Naive thymus-derived CD4-positive, alpha-beta T cell (primary cell): ENCODE measurements at regions of chr14 and their contacts with region 1.

Region 1: DNA sequence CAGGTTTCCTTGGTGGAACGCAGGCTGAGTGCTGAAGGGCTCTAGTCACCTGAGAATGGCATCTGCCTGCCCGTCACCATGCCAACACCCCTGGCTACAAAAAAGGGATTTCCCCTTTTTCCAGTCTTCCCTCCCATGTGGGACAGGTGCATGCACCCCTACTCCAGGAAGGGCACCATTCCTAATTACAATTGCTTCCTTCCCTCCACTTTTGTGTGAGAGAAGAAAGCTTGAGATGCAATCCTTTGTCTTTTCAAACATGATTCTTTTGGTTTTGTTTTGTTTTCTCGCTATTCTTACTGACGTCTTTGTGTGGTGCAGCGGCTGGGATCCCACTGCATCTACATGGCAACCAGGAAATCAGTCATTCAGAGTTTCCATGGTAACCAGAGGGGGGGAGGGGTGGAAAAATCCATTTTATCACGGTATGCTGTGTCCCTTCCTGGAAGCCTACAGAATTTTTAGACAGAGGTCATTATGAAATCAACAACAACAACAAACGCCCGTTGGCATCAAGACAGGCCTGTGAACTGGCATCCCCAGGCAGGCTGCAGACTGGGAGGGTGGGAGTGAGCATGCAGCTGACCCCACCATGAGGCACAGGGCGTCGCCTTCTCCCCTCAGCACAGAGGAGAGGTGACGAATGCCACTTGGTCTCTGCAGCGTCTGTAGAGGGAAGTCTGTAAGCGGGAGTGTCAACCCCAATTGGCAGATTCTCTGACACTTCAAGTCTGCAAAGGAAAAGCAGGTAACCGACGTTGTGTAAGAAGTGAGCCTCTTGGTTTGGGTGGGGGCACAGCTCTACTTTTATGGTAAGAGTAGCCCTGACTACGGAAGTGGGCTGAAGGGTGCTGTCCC is 13.6 kb upstream of the GNG2 start:
- DNase-seq: peak; percentile 69 to 98 (median 94)
- ATAC-seq: peak; percentile 87
- H3K4me3 ChIP-seq: peak overlapping the region; percentile 63
- H3K4me3 Mint-ChIP-seq: peak overlapping the region; percentile 55 to 96 (median 88)
- H3K27ac ChIP-seq: peak overlapping the region; percentile 96
- H3K27ac Mint-ChIP-seq: peak overlapping the region; percentile 97 to 100 (median 99)
- H3K4me1 ChIP-seq: peaks cover 23 to 43% of the 10 kb centered on the region in 2 donors
- H3K4me1 Mint-ChIP-seq: peaks cover 29 to 83% (median 74%) of the 10 kb centered on the region in 7 donors
- H3K27me3 ChIP-seq: no peaks in the 10 kb centered on the region
- H3K27me3 Mint-ChIP-seq: peaks cover 0 to 2% (median 0%) of the 10 kb centered on the region in 5 donors

Region 2: DNA sequence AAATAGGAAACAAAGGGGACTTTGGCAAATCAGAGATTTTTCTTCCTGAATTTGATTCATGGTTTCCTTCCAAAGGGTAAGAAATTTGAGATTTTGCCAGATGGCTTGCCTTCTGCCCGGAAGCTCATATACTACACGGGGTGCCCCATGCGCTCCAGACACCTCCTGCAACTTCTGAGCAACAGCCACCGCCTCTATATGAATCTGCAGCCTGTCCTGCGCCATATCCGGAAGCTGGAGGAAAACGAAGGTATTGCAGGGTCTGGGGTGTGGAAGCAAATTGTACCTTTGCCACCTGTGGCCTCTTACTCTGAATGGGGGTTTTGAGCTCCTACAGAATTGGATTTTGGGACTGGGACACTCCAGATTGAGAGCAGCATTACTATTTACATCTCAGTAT is 131.6 kb before region 1 on chr14:
- CTCF ChIA-PET with region 1: no interaction called
- POLR2A ChIA-PET with region 1: no interaction called
- intact Hi-C with region 1: no loop called
- DNase-seq: no peak
- ATAC-seq: no peak
- H3K4me3 ChIP-seq: no peak overlapping the region
- H3K4me3 Mint-ChIP-seq: no peak overlapping the region
- H3K27ac ChIP-seq: no peak overlapping the region
- H3K27ac Mint-ChIP-seq: no peak overlapping the region
- H3K4me1 ChIP-seq: no peaks in the 10 kb centered on the region
- H3K4me1 Mint-ChIP-seq: peaks cover 0 to 2% (median 0%) of the 10 kb centered on the region in 7 donors
- H3K27me3 ChIP-seq: no peaks in the 10 kb centered on the region
- H3K27me3 Mint-ChIP-seq: peaks cover 0 to 2% (median 0%) of the 10 kb centered on the region in 5 donors

Region 3: DNA sequence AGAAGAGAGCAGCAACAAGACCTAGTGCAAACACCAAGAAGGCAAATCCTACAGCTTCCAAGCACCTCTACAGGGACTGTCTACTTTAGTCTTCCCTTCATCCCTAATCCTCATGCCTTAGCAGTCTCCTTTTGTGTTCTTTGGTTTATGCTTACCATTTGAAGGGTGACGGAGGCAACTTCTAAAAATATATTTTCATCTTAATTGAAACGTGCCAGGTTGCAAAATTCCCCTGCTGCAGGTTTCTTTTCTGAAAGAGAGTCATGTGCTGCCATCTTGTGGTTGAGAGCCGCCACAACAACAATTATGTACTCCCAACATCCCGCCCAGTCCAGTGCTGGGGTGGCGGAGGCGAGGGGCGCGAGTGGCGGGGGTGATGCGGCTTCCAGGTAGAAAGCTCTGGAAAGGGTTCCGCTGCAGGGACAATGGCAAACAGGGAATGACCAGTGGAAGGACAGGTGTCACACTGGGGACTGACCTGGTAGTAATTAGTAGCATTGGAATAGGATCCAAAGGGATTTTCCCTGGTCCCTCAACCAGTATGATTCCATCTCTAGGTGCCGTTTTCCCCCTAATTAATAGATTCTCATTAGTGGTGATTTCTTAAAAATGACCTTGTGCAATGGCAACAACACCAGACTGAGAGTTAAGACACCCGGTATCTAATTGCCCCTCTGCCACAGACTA is 66.7 kb before region 1 on chr14:
- CTCF ChIA-PET with region 1: interaction called, 3 read pairs
- POLR2A ChIA-PET with region 1: no interaction called
- intact Hi-C with region 1: loop called (anchors 1 to 2 kb)
- DNase-seq: peak; percentile 34 to 74 (median 64)
- ATAC-seq: peak; percentile 84
- H3K4me3 ChIP-seq: no peak overlapping the region
- H3K4me3 Mint-ChIP-seq: peak overlapping the region; percentile 5 to 76 (median 53)
- H3K27ac ChIP-seq: no peak overlapping the region
- H3K27ac Mint-ChIP-seq: peak overlapping the region in 6 of 9 donors; percentile 35 to 89 (median 46)
- H3K4me1 ChIP-seq: peaks cover 5 to 15% of the 10 kb centered on the region in 2 donors
- H3K4me1 Mint-ChIP-seq: peaks cover 18 to 34% (median 26%) of the 10 kb centered on the region in 7 donors
- H3K27me3 ChIP-seq: no peaks in the 10 kb centered on the region
- H3K27me3 Mint-ChIP-seq: peaks cover 0 to 48% (median 5%) of the 10 kb centered on the region in 5 donors

Region 4: GRCh38 chr14:51873221-51873893 is 26.5 kb after region 1 on chr14:
- CTCF ChIA-PET with region 1: no interaction called
- POLR2A ChIA-PET with region 1: interaction called, 3 read pairs
- intact Hi-C with region 1: loop called in 1 of 2 experiments (anchors 1 kb)
- DNase-seq: peak in 2 of 9 donors; percentile 38 to 50
- ATAC-seq: peak; percentile 76
- H3K4me3 ChIP-seq: no peak overlapping the region
- H3K4me3 Mint-ChIP-seq: peak overlapping the region in 6 of 10 donors; percentile 1 to 70 (median 28)
- H3K27ac ChIP-seq: no peak overlapping the region
- H3K27ac Mint-ChIP-seq: peak overlapping the region; percentile 24 to 84 (median 69)
- H3K4me1 ChIP-seq: peaks cover 31 to 68% of the 10 kb centered on the region in 2 donors
- H3K4me1 Mint-ChIP-seq: peaks cover 34 to 64% (median 56%) of the 10 kb centered on the region in 7 donors
- H3K27me3 ChIP-seq: no peaks in the 10 kb centered on the region
- H3K27me3 Mint-ChIP-seq: no peaks in the 10 kb centered on the region

Region 5: GRCh38 chr14:51908086-51908485 is 61.2 kb after region 1 on chr14:
- CTCF ChIA-PET with region 1: no interaction called
- POLR2A ChIA-PET with region 1: interaction called, 3 read pairs
- intact Hi-C with region 1: loop called in 1 of 2 experiments (anchors 1 kb)
- DNase-seq: no peak
- ATAC-seq: no peak
- H3K4me3 ChIP-seq: no peak overlapping the region
- H3K4me3 Mint-ChIP-seq: no peak overlapping the region
- H3K27ac ChIP-seq: no peak overlapping the region
- H3K27ac Mint-ChIP-seq: peak overlapping the region in 1 of 9 donors; percentile 15
- H3K4me1 ChIP-seq: peaks cover 20 to 21% of the 10 kb centered on the region in 2 donors
- H3K4me1 Mint-ChIP-seq: peaks cover 42 to 84% (median 67%) of the 10 kb centered on the region in 7 donors
- H3K27me3 ChIP-seq: no peaks in the 10 kb centered on the region
- H3K27me3 Mint-ChIP-seq: no peaks in the 10 kb centered on the region

Region 6: GRCh38 chr14:51989293-51990234 is 142.7 kb after region 1 on chr14 and contains the start of gene RTRAF:
- CTCF ChIA-PET with region 1: no interaction called
- POLR2A ChIA-PET with region 1: interaction called, 6 read pairs
- intact Hi-C with region 1: loop called (anchors 1 kb)
- DNase-seq: peak; percentile 86 to 93 (median 91)
- ATAC-seq: peak; percentile 98
- H3K4me3 ChIP-seq: peak within 1 kb of the TSS; percentile 60
- H3K4me3 Mint-ChIP-seq: peak within 1 kb of the TSS; percentile 93 to 97 (median 95)
- H3K27ac ChIP-seq: peak within 1 kb of the TSS; percentile 88
- H3K27ac Mint-ChIP-seq: peak within 1 kb of the TSS; percentile 91 to 99 (median 95)
- H3K4me1 ChIP-seq: peaks cover 19 to 22% of the 10 kb centered on the region in 2 donors
- H3K4me1 Mint-ChIP-seq: peaks cover 20 to 57% (median 50%) of the 10 kb centered on the region in 7 donors
- H3K27me3 ChIP-seq: no peaks in the 10 kb centered on the region
- H3K27me3 Mint-ChIP-seq: peaks cover 0 to 4% (median 0%) of the 10 kb centered on the region in 5 donors
- total RNA-seq, gene RTRAF: 112 to 180 (median 116) TPM

Region 7: DNA sequence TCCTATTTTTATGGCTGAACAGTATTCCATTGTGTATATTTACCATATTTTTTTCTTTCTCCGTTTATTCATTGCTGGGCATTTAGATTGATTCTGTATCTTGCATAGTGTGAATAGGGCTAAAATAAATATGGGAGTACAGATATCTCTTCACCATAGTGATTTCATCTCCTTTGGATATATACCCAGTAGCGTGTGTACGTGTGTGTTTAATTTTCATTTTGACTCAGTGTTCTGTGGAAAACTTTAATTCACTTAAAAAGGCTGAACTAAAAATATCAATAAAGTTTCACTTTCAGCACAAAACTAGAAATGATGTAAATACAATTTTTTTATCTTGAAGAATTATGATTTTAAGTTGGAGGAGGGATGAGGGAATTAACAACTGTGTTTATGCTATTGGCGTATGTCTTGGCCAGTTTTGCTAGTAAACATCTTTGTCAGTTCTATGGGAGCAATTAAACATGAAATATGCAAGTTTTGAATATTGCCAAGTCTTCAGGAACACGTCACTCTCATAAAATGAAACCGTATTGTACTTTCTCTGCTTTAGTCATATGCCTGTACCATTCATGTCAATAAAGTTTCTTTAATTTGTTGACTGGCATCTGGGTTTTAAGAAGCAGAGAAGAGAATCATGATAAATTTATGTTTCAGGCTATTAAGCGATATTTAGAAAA is 567.0 kb after region 1 on chr14:
- CTCF ChIA-PET with region 1: no interaction called
- POLR2A ChIA-PET with region 1: no interaction called
- intact Hi-C with region 1: loop called in 1 of 2 experiments (anchors 5 kb)
- DNase-seq: no peak
- ATAC-seq: no peak
- H3K4me3 ChIP-seq: no peak overlapping the region
- H3K4me3 Mint-ChIP-seq: peak overlapping the region in 2 of 10 donors; percentile 13 to 74
- H3K27ac ChIP-seq: no peak overlapping the region
- H3K27ac Mint-ChIP-seq: peak overlapping the region in 2 of 9 donors; percentile 29 to 90
- H3K4me1 ChIP-seq: no peaks in the 10 kb centered on the region
- H3K4me1 Mint-ChIP-seq: peaks cover 0 to 65% (median 6%) of the 10 kb centered on the region in 7 donors
- H3K27me3 ChIP-seq: no peaks in the 10 kb centered on the region
- H3K27me3 Mint-ChIP-seq: no peaks in the 10 kb centered on the region

Region 8: DNA sequence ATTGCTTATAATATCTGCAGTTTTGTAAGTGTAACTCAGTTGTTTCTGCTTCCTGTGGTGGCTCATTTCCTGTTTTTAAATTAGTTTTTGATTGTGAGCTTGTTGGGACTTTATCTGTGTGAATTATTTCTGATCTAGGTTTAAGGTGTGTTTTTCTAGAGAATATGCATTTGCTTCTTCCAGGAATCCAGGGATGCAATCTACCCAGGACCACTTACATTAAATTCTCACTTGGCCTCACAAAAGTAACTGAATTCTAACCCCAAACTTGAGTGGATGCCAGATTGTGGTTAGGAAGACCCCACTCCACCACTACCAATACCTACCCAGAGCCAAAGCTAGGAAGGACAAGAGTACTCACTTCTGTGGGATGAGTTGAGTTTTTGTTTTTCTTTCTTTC is 895.0 kb after region 1 on chr14:
- CTCF ChIA-PET with region 1: no interaction called
- POLR2A ChIA-PET with region 1: no interaction called
- intact Hi-C with region 1: no loop called
- DNase-seq: peak in 7 of 9 donors; percentile 13 to 52 (median 40)
- ATAC-seq: peak; percentile 60
- H3K4me3 ChIP-seq: peak overlapping the region; percentile 54
- H3K4me3 Mint-ChIP-seq: peak overlapping the region; percentile 75 to 93 (median 84)
- H3K27ac ChIP-seq: peak overlapping the region; percentile 68
- H3K27ac Mint-ChIP-seq: peak overlapping the region; percentile 92 to 100 (median 96)
- H3K4me1 ChIP-seq: peaks cover 48 to 64% of the 10 kb centered on the region in 2 donors
- H3K4me1 Mint-ChIP-seq: peaks cover 42 to 90% (median 74%) of the 10 kb centered on the region in 7 donors
- H3K27me3 ChIP-seq: no peaks in the 10 kb centered on the region
- H3K27me3 Mint-ChIP-seq: no peaks in the 10 kb centered on the region